CD4-positive, alpha-beta T cell (primary cell): ENCODE measurements at regions of chr15 and their contacts with region 1.

Region 1: DNA sequence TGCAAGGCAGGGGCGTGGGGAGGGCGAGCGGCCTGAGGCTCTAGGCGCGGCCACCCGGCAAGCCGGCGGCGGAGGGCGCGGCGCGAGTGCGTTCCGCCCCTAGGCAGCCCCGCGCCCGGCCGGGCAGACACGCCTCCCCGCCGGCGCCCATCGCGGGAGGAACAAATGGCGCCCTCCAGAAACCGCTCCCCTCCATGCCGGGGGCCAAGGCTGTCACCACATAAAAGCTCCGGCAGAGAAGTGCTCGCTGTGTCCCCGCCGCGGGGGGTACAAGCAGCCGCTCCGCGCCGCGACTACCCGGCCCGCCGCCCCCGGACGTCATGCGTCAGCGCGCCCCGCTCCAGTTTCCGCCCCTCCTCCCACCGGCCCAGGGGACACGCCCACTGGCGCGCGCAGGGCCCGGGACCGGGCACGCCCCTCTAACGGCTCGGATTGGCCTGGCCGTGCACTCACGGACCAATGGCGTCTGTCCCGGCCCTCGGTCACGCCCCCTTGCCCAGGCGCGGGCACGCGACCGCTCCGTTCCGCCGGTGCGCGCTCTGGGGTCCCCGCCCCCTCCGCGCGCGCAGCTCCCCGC is 391 bp upstream of the KLF13 start:
- DNase-seq: peak; percentile 98 to 100 (median 100)
- ATAC-seq: peak; percentile 69
- H3K4me3 ChIP-seq: peak overlapping the region; percentile 59
- H3K4me3 Mint-ChIP-seq: peak overlapping the region; percentile 90
- H3K27ac ChIP-seq: peak overlapping the region; percentile 71 to 95
- H3K27ac Mint-ChIP-seq: peak overlapping the region; percentile 92
- H3K4me1 ChIP-seq: peaks cover 43% of the 10 kb centered on the region
- H3K4me1 Mint-ChIP-seq: peaks cover 64% of the 10 kb centered on the region
- H3K27me3 ChIP-seq: no peaks in the 10 kb centered on the region
- H3K27me3 Mint-ChIP-seq: no peaks in the 10 kb centered on the region
- CTCF ChIP-seq: no peak

Region 2: GRCh38 chr15:31060429-31061140 is 265.7 kb before region 1 on chr15:
- CTCF ChIA-PET with region 1: no interaction called
- POLR2A ChIA-PET with region 1: no interaction called
- intact Hi-C with region 1: no loop called
- DNase-seq: no peak
- ATAC-seq: no peak
- H3K4me3 ChIP-seq: no peak overlapping the region
- H3K4me3 Mint-ChIP-seq: no peak overlapping the region
- H3K27ac ChIP-seq: no peak overlapping the region
- H3K27ac Mint-ChIP-seq: no peak overlapping the region
- H3K4me1 ChIP-seq: no peaks in the 10 kb centered on the region
- H3K4me1 Mint-ChIP-seq: no peaks in the 10 kb centered on the region
- H3K27me3 ChIP-seq: peaks cover 0 to 4% of the 10 kb centered on the region in 2 experiments
- H3K27me3 Mint-ChIP-seq: peaks cover 13% of the 10 kb centered on the region
- CTCF ChIP-seq: no peak

Region 3: GRCh38 chr15:31215490-31216214 is 110.6 kb before region 1 on chr15:
- CTCF ChIA-PET with region 1: interaction called, 3 read pairs
- POLR2A ChIA-PET with region 1: interaction called, 61 read pairs
- intact Hi-C with region 1: loop called (anchors 2 to 10 kb)
- DNase-seq: peak; percentile 60 to 86 (median 78)
- ATAC-seq: peak; percentile 69
- H3K4me3 ChIP-seq: peak overlapping the region; percentile 35
- H3K4me3 Mint-ChIP-seq: peak overlapping the region; percentile 70
- H3K27ac ChIP-seq: peak overlapping the region; percentile 55 to 70
- H3K27ac Mint-ChIP-seq: peak overlapping the region; percentile 94
- H3K4me1 ChIP-seq: peaks cover 32% of the 10 kb centered on the region
- H3K4me1 Mint-ChIP-seq: peaks cover 57% of the 10 kb centered on the region
- H3K27me3 ChIP-seq: no peaks in the 10 kb centered on the region
- H3K27me3 Mint-ChIP-seq: no peaks in the 10 kb centered on the region
- CTCF ChIP-seq: peak; percentile 83

Region 4: DNA sequence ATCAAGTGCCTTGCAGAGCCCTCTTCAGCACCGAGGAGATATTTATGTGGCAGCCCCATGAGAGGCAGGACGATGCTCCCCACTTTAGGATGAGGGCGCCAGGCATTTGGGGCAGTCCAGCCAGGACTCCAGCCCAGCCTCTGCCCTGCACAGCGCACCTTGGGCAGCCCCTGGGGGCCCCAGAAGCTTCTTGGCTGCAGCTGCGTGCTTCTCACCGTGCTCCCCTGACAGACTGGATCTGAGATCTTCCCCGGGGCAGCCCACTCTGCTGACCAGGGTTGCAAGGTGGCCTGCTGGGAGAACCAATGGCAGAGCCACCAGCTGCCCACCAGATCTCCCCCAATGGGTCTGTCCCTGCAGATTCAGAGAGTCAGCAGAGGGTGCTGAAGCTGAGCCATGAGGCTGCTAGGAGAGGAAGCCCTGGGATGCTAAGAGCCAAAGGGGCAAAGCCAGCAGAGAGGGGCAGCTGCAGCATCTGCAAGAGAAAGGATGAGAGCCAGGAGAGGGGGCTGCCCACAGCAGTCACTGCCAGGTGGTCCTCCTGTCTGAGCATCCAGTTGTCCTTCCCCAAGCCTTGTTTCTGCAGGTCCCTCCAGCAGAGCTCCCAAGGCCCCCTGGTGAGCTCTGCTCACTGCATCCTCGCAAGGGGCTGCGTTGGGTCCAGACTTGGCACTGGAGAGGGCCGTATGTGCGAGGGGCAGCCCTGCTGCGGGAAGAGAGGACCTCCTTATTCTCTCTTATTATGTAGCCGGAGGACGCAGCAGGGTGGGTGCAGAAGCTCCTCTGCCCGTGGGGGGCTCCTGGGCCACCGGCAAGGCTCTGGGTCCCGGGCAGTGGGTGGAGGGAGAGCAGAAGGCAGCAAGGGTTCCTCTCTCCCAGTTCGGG is 14.3 kb before region 1 on chr15:
- CTCF ChIA-PET with region 1: interaction called, 3 read pairs
- POLR2A ChIA-PET with region 1: interaction called, 12 read pairs
- intact Hi-C with region 1: no loop called
- DNase-seq: no peak
- ATAC-seq: no peak
- H3K4me3 ChIP-seq: no peak overlapping the region
- H3K4me3 Mint-ChIP-seq: no peak overlapping the region
- H3K27ac ChIP-seq: no peak overlapping the region
- H3K27ac Mint-ChIP-seq: no peak overlapping the region
- H3K4me1 ChIP-seq: peaks cover 31% of the 10 kb centered on the region
- H3K4me1 Mint-ChIP-seq: peaks cover 37% of the 10 kb centered on the region
- H3K27me3 ChIP-seq: peaks cover 0 to 3% of the 10 kb centered on the region in 2 experiments
- H3K27me3 Mint-ChIP-seq: peaks cover 5% of the 10 kb centered on the region
- CTCF ChIP-seq: no peak

Region 5: GRCh38 chr15:31365655-31366127 is 39.4 kb after region 1 on chr15:
- CTCF ChIA-PET with region 1: interaction called, 7 read pairs
- POLR2A ChIA-PET with region 1: interaction called, 566 read pairs
- intact Hi-C with region 1: loop called (anchors 1 to 2 kb)
- DNase-seq: peak; percentile 59 to 90 (median 74)
- ATAC-seq: peak; percentile 51
- H3K4me3 ChIP-seq: peak overlapping the region; percentile 31
- H3K4me3 Mint-ChIP-seq: peak overlapping the region; percentile 82
- H3K27ac ChIP-seq: peak overlapping the region; percentile 72 to 86
- H3K27ac Mint-ChIP-seq: peak overlapping the region; percentile 90
- H3K4me1 ChIP-seq: peaks cover 98% of the 10 kb centered on the region
- H3K4me1 Mint-ChIP-seq: peaks cover 98% of the 10 kb centered on the region
- H3K27me3 ChIP-seq: no peaks in the 10 kb centered on the region
- H3K27me3 Mint-ChIP-seq: no peaks in the 10 kb centered on the region
- CTCF ChIP-seq: peak; percentile 58

Region 6: DNA sequence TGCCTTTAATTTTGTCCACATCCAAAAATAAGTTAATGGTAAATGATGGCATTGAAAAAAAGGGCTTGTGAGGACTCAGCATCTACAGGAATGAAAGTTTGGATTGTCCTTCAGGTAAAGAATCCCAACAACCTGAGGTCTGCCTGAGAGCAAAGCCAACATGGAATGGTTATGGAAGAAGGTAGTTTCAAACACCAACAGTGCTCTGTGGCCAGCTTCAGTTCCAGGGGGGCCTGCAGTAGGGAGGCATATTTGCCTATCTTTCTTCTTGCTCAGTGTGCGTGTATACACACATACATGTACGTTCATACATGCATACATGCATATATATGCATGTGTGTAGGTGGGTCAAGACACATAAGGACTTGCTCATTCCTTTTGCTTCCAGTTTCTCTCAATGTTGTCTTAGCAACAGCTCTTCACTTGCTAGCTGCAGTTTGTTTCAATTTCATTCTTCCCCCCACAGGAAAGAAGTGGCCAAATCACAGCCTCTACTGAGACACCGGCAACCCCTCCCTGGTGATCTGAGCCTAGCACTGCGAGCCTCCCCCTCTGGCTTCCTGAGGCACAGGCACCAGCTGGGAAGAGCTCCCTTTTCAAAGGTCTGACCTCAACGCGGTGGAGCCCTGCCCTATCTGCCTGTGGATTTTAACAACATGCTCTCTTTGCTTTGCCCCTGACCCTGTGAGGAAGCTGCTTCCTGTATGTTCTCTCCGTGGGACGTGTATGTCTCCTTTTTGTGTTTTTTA is 146.6 kb after region 1 on chr15:
- CTCF ChIA-PET with region 1: no interaction called
- POLR2A ChIA-PET with region 1: interaction called, 18 read pairs
- intact Hi-C with region 1: no loop called
- DNase-seq: peak in 13 of 14 experiments; percentile 28 to 86 (median 43)
- ATAC-seq: peak; percentile 91
- H3K4me3 ChIP-seq: peak overlapping the region; percentile 46
- H3K4me3 Mint-ChIP-seq: peak overlapping the region; percentile 67
- H3K27ac ChIP-seq: peak overlapping the region; percentile 55 to 69
- H3K27ac Mint-ChIP-seq: peak overlapping the region; percentile 83
- H3K4me1 ChIP-seq: peaks cover 57% of the 10 kb centered on the region
- H3K4me1 Mint-ChIP-seq: peaks cover 45% of the 10 kb centered on the region
- H3K27me3 ChIP-seq: no peaks in the 10 kb centered on the region
- H3K27me3 Mint-ChIP-seq: no peaks in the 10 kb centered on the region
- CTCF ChIP-seq: no peak

Region 7: GRCh38 chr15:31870328-31871165 is 544.3 kb after region 1 on chr15:
- CTCF ChIA-PET with region 1: no interaction called
- POLR2A ChIA-PET with region 1: no interaction called
- intact Hi-C with region 1: loop called in 1 of 2 experiments (anchors 10 kb)
- DNase-seq: peak; percentile 69 to 95 (median 82)
- ATAC-seq: peak; percentile 83
- H3K4me3 ChIP-seq: peak within 1 kb of the TSS; percentile 66
- H3K4me3 Mint-ChIP-seq: peak within 1 kb of the TSS; percentile 87
- H3K27ac ChIP-seq: no peak within 1 kb of the TSS
- H3K27ac Mint-ChIP-seq: peak within 1 kb of the TSS; percentile 77
- H3K4me1 ChIP-seq: peaks cover 14% of the 10 kb centered on the region
- H3K4me1 Mint-ChIP-seq: peaks cover 23% of the 10 kb centered on the region
- H3K27me3 ChIP-seq: peaks cover 0 to 8% of the 10 kb centered on the region in 2 experiments
- H3K27me3 Mint-ChIP-seq: no peaks in the 10 kb centered on the region
- CTCF ChIP-seq: no peak